ENCODE measurements at regions of chr7 and their contacts with region 1.

Region 1: GRCh38 chr7:132250883-132251653 is 325.2 kb downstream of the PLXNA4 start:
- DNase-seq: peak; percentile 74
- ATAC-seq: peak; percentile 73 to 85

Region 2: DNA sequence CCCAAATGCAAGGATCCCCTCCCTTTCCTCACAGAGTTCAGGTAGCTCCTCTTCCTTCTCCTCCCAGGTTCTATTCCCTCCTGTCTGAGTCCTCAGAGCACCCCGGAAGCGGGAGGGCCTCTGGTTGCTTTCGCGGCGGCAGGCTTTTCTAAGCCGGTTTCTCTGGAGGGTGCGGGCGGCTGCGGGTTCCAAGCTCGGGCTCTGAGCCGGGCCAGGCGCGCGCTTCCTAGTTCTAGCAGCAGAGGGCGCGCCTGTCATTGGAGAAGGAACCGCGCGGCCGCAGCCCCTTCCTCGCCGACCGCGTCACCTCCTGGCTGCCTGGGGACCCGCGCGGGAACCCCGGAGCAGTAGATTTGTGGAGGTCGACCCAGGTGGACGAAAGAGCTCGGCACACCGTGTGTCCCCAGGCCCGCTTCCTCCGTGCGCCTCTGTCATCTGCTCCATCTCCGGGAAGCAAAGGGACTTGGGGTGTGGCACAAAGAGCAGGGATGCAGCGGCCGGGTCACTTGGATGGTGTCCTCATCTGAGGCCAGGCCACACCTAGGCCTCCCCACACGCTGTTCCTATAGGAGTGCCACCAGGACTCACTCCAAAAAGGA is 305.7 kb before region 1 on chr7:
- intact Hi-C with region 1: loop called (anchors 2 to 5 kb)
- DNase-seq: peak; percentile 57
- ATAC-seq: peak; percentile 64 to 71

Region 3: GRCh38 chr7:132004536-132005272 is 246.4 kb before region 1 on chr7:
- intact Hi-C with region 1: loop called in 1 of 2 experiments (anchors 2 kb)
- DNase-seq: peak; percentile 32
- ATAC-seq: peak; percentile 83 to 93